ENCODE measurements at regions of chrX and their contacts with region 1.

Region 1: DNA sequence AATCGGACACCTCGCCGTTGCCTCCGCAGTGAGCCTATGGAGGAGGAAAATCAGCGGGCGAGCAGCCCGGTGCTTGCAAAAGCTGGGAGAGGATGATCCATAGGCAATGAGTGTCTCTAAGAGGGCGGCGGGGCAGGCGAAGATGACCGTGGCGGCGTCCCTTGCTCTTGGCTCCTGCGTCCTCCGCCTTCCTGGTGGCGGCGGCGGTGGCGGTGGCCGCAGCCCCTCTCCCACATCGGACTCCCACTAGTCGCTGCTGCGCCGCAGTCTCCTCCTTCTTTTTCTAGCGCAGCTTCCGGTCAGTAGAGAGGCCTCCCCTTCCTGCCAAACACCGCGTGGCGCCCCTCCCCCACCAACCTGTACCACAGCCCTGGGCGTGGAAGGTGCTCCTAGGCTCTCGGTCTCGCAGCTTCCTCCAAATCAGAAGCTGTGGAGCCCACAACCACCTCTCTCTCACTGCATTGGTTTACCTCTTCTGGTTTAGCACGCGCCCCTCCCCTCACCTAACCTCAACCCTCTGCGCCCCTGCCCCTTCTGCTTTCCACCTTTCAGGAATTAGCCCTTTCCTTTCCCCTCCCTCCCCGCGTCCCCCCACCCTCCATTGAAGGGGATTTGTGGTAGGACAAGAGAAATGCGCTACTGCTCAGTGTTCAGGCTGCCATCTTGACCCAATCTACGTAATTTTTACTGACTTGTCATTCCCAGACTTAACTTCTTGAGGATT is at the start of gene SPIN3:
- DNase-seq: peak; percentile 56
- ATAC-seq: peak; percentile 95
- H3K4me3 ChIP-seq: peak within 1 kb of the TSS; percentile 72
- H3K27ac ChIP-seq: peak within 1 kb of the TSS; percentile 45
- H3K4me1 ChIP-seq: no peaks in the 10 kb centered on the region; the same call in 1 of the 2 replicates
- H3K27me3 ChIP-seq: no peaks in the 10 kb centered on the region
- CTCF ChIP-seq: no peak
- EP300 ChIP-seq: no peak
- POLR2A ChIP-seq: peak; percentile 84
- RAD21 ChIP-seq: no peak
- polyA plus RNA-seq, gene SPIN3: 2.1 to 2.4 TPM

Region 2: DNA sequence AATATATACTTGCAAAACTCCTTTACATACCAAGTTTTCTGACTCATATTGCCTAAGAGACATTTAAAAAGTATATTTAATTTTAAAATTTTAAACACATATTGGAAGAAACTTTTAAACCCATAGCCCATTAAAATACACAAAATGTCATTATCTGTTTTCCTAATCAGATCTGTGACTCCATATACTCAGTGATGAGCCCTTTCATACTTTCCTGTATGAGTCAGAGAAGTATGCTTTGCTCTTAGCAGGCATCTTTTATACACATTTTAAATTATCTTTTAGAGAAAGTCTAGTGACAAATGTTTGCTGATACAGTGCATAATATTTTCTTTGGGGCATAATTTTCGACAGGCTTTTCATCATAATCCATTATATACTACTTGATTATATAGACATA is 26.5 kb before region 1 on chrX:
- CTCF ChIA-PET with region 1: no interaction called
- POLR2A ChIA-PET with region 1: no interaction called
- RAD21 ChIA-PET with region 1: no interaction called
- SMC1A ChIA-PET with region 1: no interaction called
- in situ Hi-C with region 1: no loop called
- intact Hi-C with region 1: no loop called
- DNase-seq: no peak
- ATAC-seq: no peak
- H3K4me3 ChIP-seq: no peak overlapping the region
- H3K27ac ChIP-seq: no peak overlapping the region
- H3K4me1 ChIP-seq: no peaks in the 10 kb centered on the region
- H3K27me3 ChIP-seq: no peaks in the 10 kb centered on the region
- CTCF ChIP-seq: no peak
- EP300 ChIP-seq: no peak
- POLR2A ChIP-seq: no peak
- RAD21 ChIP-seq: no peak

Region 3: DNA sequence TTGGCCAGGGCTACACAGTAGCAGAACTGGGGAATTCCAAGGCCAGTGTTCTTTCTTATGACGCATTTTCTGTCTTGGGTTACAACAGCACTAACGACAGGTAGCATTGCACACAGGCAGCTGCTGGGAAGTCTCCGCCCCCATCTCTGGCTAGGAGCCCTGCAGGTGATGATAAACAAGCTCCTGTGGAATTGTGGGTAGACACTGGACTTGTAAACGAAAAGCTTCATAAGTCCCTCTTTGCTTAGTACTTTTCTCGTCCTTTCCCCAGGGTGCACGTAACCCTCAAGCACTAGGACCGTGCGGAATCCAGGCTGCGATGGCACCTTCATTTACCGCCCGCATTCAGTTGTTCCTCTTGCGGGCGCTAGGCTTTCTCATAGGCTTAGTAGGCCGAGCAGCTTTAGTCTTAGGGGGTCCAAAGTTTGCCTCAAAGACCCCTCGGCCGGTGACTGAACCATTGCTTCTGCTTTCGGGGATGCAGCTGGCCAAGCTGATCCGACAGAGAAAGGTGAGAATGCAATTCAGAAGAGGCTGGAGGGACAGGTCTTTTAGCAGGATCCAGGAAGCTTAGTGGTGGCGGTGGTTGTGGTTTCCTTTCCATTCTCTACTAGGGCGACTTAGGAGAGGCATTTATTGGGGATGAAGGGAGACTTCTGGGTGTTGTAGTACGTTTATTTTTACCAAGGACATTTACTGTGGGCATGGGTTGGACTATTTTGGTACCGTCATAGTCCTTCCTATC is 291.2 kb after region 1 on chrX and contains the start of gene FAAH2:
- CTCF ChIA-PET with region 1: no interaction called
- POLR2A ChIA-PET with region 1: no interaction called
- RAD21 ChIA-PET with region 1: interaction called, 4 read pairs
- SMC1A ChIA-PET with region 1: no interaction called
- in situ Hi-C with region 1: loop called (anchors 10 kb)
- intact Hi-C with region 1: no loop called
- DNase-seq: peak; percentile 23
- ATAC-seq: peak; percentile 94
- H3K4me3 ChIP-seq: peak within 1 kb of the TSS; percentile 47
- H3K27ac ChIP-seq: peak within 1 kb of the TSS; percentile 15
- H3K4me1 ChIP-seq: no peaks in the 10 kb centered on the region
- H3K27me3 ChIP-seq: no peaks in the 10 kb centered on the region
- CTCF ChIP-seq: 0 out of 6 replicates have a peak, but pooled peaks of 1 of the 3 experiments have one; percentile 5
- EP300 ChIP-seq: peak in 1 of 2 experiments; percentile 30; a peak in 1 of 4 replicates
- POLR2A ChIP-seq: no peak
- RAD21 ChIP-seq: no peak
- polyA plus RNA-seq, gene FAAH2: 1.5 to 2.4 TPM

Region 4: GRCh38 chrX:57453901-57454300 is 458.5 kb after region 1 on chrX:
- CTCF ChIA-PET with region 1: interaction called, 6 read pairs
- POLR2A ChIA-PET with region 1: no interaction called
- RAD21 ChIA-PET with region 1: no interaction called
- SMC1A ChIA-PET with region 1: no interaction called
- in situ Hi-C with region 1: no loop called
- intact Hi-C with region 1: loop called (anchors 10 kb)
- DNase-seq: peak; percentile 0
- ATAC-seq: peak; percentile 90
- H3K4me3 ChIP-seq: no peak overlapping the region
- H3K27ac ChIP-seq: no peak overlapping the region
- H3K4me1 ChIP-seq: no peaks in the 10 kb centered on the region
- H3K27me3 ChIP-seq: no peaks in the 10 kb centered on the region
- CTCF ChIP-seq: peak; percentile 65 to 71 (median 68)
- EP300 ChIP-seq: no peak
- POLR2A ChIP-seq: no peak
- RAD21 ChIP-seq: peak; percentile 70

Region 5: DNA sequence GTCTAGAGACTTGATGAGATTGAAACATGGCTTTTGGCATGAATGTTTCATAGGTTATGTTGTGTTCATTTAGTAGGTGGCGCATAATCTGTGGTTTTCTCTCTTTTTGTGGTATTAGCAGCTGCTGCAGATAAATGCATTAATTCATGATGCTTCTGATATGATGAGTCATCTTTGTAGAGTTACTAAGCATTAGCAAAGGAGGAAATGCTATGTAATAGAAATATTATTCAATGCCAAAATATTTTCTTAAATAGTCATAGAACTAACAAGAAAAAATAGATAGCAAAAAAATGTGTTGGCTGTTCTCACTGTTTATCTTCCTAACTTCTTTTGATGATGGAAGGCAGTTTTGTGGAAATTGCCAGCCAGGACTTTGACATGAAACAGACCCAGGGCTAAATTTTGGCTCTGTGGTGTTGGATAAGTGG is 600.0 kb after region 1 on chrX:
- CTCF ChIA-PET with region 1: no interaction called
- POLR2A ChIA-PET with region 1: no interaction called
- RAD21 ChIA-PET with region 1: no interaction called
- SMC1A ChIA-PET with region 1: no interaction called
- in situ Hi-C with region 1: no loop called
- intact Hi-C with region 1: loop called (anchors 10 kb)
- DNase-seq: no peak
- ATAC-seq: peak; percentile 4; the same call in 1 of the 3 replicates
- H3K4me3 ChIP-seq: peak overlapping the region; percentile 18; the same call in 1 of the 2 replicates
- H3K27ac ChIP-seq: no peak overlapping the region
- H3K4me1 ChIP-seq: no peaks in the 10 kb centered on the region
- H3K27me3 ChIP-seq: no peaks in the 10 kb centered on the region
- CTCF ChIP-seq: no peak
- EP300 ChIP-seq: no peak
- POLR2A ChIP-seq: no peak
- RAD21 ChIP-seq: no peak

Measured in GM12878 (cell line).